AG04449 (cell line): ENCODE measurements at regions of chr12 and their contacts with region 1.

Region 1: DNA sequence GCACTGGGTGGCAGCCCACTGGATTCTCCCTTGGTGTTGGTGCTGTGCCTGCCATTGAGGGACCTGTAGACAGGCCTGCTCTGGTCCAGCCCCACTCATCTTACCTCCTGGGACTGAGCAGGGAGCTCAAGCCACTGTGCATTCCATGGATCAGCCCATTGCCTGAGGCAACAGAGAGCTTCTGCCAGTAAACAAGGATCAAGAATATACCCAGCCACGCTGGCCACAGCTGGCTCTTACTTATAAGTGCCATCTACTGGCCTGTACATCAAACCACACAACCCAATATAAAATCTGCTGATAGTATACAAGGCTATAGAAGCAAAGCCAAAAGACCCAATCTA is 4.3 kb upstream of the FAM186B start:
- DNase-seq: no peak
- H3K4me3 ChIP-seq: no peak overlapping the region
- CTCF ChIP-seq: no peak

Region 2: DNA sequence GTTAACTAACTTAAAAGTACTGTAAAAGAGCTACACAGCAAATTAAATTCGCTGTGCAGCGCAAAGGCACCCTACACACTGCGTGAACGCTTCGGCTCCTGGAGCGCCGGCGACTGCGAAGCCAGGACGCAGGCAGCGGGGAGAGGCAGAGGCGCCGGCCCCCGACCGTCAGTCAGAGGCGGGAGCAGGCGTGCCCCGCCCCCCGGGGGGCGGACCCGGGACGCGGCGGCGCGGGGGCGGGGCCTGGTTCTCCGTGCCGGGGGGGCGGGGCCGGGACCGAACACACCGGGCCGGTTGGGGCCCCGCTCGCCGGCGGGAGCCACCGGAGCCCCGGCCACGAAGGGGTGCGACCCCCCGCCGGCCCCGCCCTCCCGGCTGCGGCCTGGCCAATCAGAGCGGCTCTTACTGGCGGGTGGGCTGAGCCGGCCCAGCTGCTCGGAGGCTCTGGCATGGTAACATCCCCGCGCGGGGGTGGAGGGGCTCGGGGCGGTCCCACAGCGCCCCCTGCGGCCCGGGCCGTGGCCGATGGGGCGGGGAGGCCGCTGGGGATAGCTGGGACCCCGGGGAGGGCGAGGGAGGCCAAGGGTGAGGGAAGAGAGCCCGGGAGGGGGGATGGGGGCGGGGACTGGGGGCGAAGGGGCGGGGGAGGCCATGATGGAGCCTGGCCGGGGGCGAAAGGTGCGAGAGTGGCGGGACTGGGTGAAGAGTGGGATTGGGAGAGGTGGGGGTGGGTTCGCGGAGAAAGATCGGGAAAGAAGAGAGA is 13.6 kb after region 1 on chr12 and contains the start of gene PRPF40B:
- CTCF ChIA-PET with region 1: interaction called, 11 read pairs
- POLR2A ChIA-PET with region 1: no interaction called
- DNase-seq: no peak
- H3K4me3 ChIP-seq: peak within 1 kb of the TSS; percentile 65
- CTCF ChIP-seq: peak; percentile 75